Heart right ventricle (tissue), 16 donors: ENCODE measurements at regions of chr22 and their contacts with region 1.

Region 1: DNA sequence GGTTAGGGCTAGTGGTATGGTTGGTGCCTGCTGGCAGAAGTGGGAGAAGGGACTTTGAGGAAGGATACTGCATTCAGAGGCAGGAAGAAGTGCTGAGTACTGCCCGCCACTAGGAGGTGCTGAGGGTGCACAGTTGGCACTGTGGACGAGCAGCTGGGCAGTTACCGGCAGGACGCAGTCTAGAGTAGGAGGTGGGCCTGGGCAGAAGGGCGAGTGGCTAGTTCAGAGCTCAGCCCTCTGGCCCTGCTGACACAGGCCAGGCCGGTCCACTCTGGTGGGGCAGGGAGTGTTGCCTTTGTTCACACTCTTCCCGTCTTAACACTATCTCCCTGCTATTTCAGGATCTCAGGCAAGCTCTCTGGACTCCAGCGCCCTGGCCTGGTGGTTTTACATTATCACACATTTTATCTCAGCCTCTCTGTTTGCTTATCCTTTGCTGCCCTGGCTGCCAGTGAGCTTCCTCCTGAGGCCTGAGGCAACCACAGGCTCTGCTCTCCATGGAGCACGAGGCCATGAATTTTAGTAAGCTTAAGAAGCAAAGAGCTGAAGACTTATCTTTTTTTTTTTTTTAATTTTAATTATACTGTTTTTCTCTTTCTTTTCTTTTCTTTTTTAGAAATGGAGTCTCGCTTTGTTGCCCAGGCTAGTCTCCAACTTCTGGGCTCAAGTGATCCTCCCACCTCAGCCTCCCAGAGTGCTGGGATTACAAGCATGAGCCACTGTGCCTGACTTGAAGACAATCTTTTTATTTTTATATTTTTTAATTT is 26.9 kb downstream of the SNAP29 start:
- DNase-seq: peak; percentile 77 to 81
- ATAC-seq: peak; percentile 91 to 96 (median 95)
- H3K4me3 ChIP-seq: no peak overlapping the region
- H3K27ac ChIP-seq: peak overlapping the region in 9 of 10 donors; percentile 7 to 85 (median 67)
- H3K4me1 ChIP-seq: peaks cover 0 to 19% (median 12%) of the 10 kb centered on the region in 9 donors
- H3K27me3 ChIP-seq: no peaks in the 10 kb centered on the region
- CTCF ChIP-seq: peak; percentile 67 to 85 (median 81)

Region 2: DNA sequence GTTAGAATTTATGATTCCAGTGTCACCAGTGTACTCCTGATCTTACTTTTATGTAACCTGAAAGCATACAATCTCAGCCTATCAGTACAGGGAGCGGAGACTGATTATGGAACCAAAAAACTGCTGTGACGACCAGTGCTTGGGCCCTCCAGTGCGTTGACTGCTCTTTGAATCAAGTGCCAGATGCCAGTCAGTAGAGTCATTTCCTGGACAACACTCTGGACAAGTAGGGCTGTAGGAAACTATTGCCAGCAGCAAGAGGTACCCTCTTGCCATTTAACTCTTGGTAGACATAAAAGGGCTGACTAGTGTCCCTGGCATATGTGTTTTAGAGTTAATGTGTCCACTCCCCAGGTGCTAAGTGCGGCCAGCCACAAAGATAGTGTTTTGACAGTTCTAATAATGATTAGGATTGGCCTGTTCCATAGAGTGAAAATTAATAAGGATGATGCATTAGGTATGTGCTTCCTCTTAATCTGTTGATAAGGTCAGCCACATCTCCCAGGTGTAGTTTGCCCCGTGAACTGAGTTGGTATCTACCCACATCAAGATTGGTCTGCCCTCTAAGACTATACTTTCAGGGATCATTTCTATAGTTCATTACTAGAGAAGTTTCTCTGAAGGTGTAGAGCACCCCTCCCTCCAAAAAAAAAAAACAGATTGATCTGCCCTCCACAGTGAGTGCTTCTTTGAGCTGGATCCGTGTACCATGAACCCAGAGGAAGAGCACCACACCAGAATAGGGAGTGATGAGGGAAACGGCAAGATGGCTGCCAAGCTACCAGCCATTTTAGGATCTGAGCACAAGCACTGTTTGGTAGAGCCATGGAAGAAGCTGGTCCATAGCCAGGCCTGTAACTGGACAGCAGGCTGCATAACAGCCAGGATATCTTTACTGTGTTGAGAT is 60.6 kb after region 1 on chr22:
- intact Hi-C with region 1: no loop called
- DNase-seq: no peak
- ATAC-seq: peak in 7 of 8 donors; percentile 17 to 92 (median 80)
- H3K4me3 ChIP-seq: no peak overlapping the region
- H3K27ac ChIP-seq: peak overlapping the region in 7 of 10 donors; percentile 19 to 55 (median 29)
- H3K4me1 ChIP-seq: peaks cover 8 to 46% (median 31%) of the 10 kb centered on the region in 9 donors
- H3K27me3 ChIP-seq: no peaks in the 10 kb centered on the region
- CTCF ChIP-seq: no peak

Region 3: DNA sequence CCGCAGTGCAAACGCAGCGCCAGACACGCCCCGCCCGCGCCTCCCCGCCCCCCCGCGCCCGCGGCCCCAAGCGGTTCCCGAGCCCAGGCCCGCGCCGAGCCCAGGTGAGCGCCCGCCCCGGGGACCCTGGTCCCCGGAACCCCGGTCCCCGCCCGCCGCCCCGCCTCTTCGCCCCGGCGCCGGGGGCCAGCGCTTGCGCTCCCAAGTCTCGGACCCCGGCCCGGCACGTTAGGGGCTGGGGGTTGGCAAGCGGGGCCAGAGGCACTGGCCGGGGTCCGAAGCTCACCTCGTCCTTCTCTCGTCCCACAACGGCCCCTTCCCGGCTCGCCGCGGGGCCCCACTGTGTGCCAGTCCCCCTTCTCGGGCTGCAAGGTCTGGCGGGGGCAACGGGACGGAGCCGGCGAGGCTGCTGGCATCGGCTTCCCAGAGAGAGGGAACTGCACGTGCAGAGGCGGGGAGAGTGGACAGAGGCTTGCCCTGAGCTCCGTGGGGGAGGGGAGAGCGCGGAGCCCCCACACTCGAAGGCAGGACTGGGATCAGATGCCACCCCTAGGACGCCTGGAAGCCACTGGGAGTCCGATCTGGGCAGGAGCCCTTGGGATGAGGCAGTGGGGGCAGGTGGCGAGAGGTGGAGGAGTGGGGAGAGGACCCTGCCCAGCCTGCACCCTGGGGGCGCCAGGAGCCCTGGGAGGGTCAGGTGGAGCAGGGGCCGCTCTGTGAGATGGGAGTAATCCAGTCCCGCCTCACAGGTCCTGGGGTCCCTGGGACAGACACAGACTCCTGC is 79.6 kb after region 1 on chr22:
- intact Hi-C with region 1: loop called in 1 of 10 experiments (anchors 5 kb)
- DNase-seq: no peak
- ATAC-seq: peak in 1 of 8 donors; percentile 14
- H3K4me3 ChIP-seq: peak overlapping the region in 9 of 10 donors; percentile 36 to 48 (median 42)
- H3K27ac ChIP-seq: no peak overlapping the region
- H3K4me1 ChIP-seq: peaks cover 3 to 30% (median 10%) of the 10 kb centered on the region in 9 donors
- H3K27me3 ChIP-seq: peaks cover 0 to 36% (median 16%) of the 10 kb centered on the region in 7 donors
- CTCF ChIP-seq: no peak